WTC11 (cell line): ENCODE measurements at regions of chr20 and their contacts with region 1.

Region 1: GRCh38 chr20:59933849-59934596 is 586 bp upstream of the SYCP2 start:
- DNase-seq: peak; percentile 78
- ATAC-seq: peak; percentile 93
- H3K4me3 Mint-ChIP-seq: peak overlapping the region; percentile 63
- H3K27ac Mint-ChIP-seq: no peak overlapping the region
- H3K4me1 Mint-ChIP-seq: peaks cover 6% of the 10 kb centered on the region; the same call in 1 of the 2 replicates
- H3K27me3 Mint-ChIP-seq: peaks cover 59% of the 10 kb centered on the region
- CTCF ChIP-seq: peak; percentile 72

Region 2: DNA sequence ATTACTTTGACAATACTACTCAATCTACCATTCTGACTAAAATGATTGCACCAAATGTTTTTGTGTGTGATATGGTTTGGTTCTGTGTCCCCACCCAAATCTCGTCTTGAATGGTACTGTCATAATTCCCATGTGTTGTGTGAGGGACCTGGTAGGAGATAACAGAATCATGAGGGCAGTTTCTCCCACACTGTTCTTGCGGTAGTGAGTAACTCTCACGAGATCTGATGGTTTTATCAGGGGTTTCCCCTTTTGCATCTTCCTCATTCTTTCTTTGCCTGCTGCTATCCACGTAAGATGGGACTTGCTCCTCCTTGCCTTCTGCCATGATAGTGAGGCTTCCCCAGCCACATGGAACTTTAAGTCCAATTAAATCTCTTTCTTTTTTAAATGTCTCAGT is 21.4 kb before region 1 on chr20:
- CTCF ChIA-PET with region 1: interaction called, 11 read pairs
- POLR2A ChIA-PET with region 1: no interaction called
- DNase-seq: no peak
- ATAC-seq: no peak
- H3K4me3 Mint-ChIP-seq: no peak overlapping the region
- H3K27ac Mint-ChIP-seq: no peak overlapping the region
- H3K4me1 Mint-ChIP-seq: 0 out of 2 replicates have a peak, but pooled peaks cover under 1% of the 10 kb centered on the region
- H3K27me3 Mint-ChIP-seq: peaks cover 10% of the 10 kb centered on the region
- CTCF ChIP-seq: no peak

Region 3: DNA sequence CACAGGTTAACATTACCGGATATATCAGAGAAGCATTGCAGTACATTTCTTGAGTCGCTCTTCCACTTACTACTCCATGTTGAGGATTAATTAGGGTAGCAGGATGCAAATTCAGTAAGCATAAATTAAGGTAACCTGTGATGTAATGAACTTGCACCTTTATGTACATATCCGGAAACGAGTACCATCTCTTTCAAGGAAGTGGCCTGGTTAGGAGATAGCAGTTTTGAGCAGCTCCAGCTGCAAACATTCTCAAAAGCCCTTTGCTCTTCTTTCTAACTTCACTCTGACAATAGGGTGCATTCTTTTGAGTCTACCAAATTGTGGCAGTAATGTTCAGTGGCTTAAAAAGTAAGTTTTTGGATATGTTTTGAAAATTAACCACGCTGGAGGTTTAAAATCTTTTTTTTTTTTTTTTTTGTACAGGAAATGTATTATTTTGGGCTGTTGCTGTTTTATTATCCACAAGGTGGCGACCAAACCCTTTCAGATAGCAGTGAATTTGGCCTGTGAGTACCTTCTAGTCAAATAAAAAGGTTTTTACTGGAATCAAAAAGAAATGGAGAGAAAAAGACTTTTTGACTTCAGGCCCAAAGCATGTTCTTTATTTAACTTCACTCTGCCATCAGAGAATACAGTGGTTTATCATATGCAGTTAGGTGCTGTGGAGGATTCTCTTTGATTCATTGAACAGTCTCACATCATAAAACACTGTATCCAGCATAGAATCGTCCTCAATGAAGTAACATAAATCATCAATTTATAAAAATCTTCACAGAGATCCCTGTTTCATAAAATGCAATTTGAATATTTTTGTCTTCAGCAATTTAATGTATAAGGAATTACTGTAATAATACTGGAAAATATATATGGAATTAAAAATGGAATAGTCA is 15.1 kb after region 1 on chr20:
- CTCF ChIA-PET with region 1: interaction called, 37 read pairs
- POLR2A ChIA-PET with region 1: no interaction called
- DNase-seq: no peak
- ATAC-seq: no peak
- H3K4me3 Mint-ChIP-seq: no peak overlapping the region
- H3K27ac Mint-ChIP-seq: no peak overlapping the region
- H3K4me1 Mint-ChIP-seq: peaks cover 9% of the 10 kb centered on the region
- H3K27me3 Mint-ChIP-seq: no peaks in the 10 kb centered on the region
- CTCF ChIP-seq: peak; percentile 10; the same call in 1 of the 2 replicates

Region 4: DNA sequence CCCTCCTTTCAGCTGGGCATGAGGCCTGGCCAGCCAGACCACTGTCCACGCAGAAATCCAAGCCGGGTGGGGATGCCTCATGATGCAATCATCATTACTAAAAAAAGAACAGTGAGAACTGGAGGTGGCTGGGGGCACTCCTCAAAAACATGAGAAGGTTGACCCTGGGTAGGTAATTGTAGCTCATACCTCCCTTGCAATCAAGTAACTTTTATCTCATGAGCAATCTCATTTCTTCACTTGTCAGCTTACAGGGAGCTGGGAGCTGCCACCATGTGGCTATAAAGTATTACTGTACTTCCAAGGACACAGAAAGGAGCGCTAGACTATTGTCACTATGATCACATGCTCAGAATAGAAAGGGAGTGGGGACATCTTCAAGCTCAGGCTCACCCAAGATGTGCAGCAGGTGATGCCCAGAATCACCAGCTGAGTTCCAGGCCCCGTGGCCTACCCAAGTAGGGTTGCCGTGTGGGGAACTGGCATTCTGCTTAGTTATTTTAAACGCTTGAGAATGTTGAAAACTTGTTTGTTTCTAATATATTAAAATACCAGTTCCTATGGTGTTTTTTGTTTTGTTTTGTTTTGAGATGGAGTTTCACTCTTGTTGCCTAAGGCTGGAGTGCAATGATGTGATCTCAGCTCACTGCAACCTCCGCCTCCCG is 21.2 kb after region 1 on chr20:
- CTCF ChIA-PET with region 1: interaction called, 13 read pairs
- POLR2A ChIA-PET with region 1: no interaction called
- DNase-seq: no peak
- ATAC-seq: peak; percentile 39; the same call in 1 of the 2 replicates
- H3K4me3 Mint-ChIP-seq: no peak overlapping the region
- H3K27ac Mint-ChIP-seq: peak overlapping the region; percentile 49; the same call in 1 of the 2 replicates
- H3K4me1 Mint-ChIP-seq: peaks cover 6% of the 10 kb centered on the region
- H3K27me3 Mint-ChIP-seq: peaks cover 8% of the 10 kb centered on the region
- CTCF ChIP-seq: no peak

Region 5: GRCh38 chr20:60009826-60010616 is 76.0 kb after region 1 on chr20:
- CTCF ChIA-PET with region 1: interaction called, 10 read pairs
- POLR2A ChIA-PET with region 1: no interaction called
- DNase-seq: no peak
- ATAC-seq: peak; percentile 96
- H3K4me3 Mint-ChIP-seq: no peak overlapping the region
- H3K27ac Mint-ChIP-seq: no peak overlapping the region
- H3K4me1 Mint-ChIP-seq: no peaks in the 10 kb centered on the region; the same call in 1 of the 2 replicates
- H3K27me3 Mint-ChIP-seq: peaks cover 28% of the 10 kb centered on the region
- CTCF ChIP-seq: peak; percentile 46